MCF 10A (cell line): ENCODE measurements at regions of chr5 and their contacts with region 1.

Region 1: DNA sequence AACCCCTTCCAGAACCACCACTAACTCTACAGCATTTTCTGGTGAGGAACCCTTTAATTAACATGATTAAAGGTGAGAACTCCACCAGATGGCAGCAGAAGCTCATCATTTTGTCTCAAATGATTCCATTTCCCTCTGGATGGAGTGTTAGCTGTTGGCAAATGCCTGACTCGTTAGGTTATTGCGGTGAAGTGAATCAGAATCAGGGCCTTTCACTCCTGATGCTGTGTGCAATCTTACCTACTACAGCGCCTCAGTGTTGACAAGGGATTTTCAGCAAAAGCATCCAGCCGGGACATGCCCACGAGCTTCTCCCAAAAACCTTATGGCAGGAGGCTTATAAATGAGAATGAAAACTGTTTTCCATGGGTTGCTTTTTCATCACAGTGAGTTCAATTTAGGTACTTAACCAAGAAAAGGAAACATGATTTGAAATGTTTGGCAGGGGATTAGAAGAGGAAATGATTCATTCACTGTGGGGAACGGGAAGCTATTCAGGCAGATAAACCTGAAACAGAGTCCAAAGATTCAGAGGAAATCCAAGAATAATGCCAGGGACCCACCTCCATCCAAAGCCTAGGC is 48.0 kb upstream of the CAST start:
- DNase-seq: peak; percentile 95
- H3K4me3 Mint-ChIP-seq: peak overlapping the region; percentile 33
- H3K27ac Mint-ChIP-seq: peak overlapping the region; percentile 84
- H3K4me1 Mint-ChIP-seq: peaks cover 22% of the 10 kb centered on the region
- H3K27me3 Mint-ChIP-seq: no peaks in the 10 kb centered on the region
- CTCF ChIP-seq: peak; percentile 66

Region 2: DNA sequence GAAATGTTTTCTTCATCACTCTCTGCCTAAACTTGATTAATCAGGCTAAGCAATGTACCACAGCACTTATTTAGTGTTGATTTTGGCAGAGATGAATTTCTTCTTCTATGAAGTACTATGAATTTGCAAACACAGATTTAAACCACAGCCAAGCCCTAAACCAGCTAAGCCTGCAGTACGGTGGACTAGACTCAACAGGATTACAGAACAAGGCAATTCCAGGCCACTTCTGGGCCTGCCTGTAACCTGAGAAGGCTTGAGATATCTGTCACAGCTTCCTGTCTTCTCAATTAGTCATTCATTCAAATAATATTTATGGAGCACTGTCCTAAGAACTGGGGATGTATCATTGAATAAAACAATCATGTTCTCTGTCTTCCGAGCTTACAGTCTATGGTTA is 15.6 kb after region 1 on chr5:
- CTCF ChIA-PET with region 1: interaction called, 12 read pairs
- POLR2A ChIA-PET with region 1: interaction called, 21 read pairs
- intact Hi-C with region 1: no loop called
- DNase-seq: peak; percentile 95
- H3K4me3 Mint-ChIP-seq: peak overlapping the region; percentile 3
- H3K27ac Mint-ChIP-seq: peak overlapping the region; percentile 89
- H3K4me1 Mint-ChIP-seq: peaks cover 31% of the 10 kb centered on the region
- H3K27me3 Mint-ChIP-seq: no peaks in the 10 kb centered on the region
- CTCF ChIP-seq: no peak

Region 3: GRCh38 chr5:96662725-96663513 is 48.7 kb after region 1 on chr5:
- CTCF ChIA-PET with region 1: interaction called, 47 read pairs
- POLR2A ChIA-PET with region 1: interaction called, 157 read pairs
- intact Hi-C with region 1: loop called (anchors 1 kb)
- DNase-seq: peak; percentile 95
- H3K4me3 Mint-ChIP-seq: peak overlapping the region; percentile 76
- H3K27ac Mint-ChIP-seq: peak overlapping the region; percentile 91
- H3K4me1 Mint-ChIP-seq: peaks cover 20% of the 10 kb centered on the region
- H3K27me3 Mint-ChIP-seq: no peaks in the 10 kb centered on the region
- CTCF ChIP-seq: no peak

Region 4: DNA sequence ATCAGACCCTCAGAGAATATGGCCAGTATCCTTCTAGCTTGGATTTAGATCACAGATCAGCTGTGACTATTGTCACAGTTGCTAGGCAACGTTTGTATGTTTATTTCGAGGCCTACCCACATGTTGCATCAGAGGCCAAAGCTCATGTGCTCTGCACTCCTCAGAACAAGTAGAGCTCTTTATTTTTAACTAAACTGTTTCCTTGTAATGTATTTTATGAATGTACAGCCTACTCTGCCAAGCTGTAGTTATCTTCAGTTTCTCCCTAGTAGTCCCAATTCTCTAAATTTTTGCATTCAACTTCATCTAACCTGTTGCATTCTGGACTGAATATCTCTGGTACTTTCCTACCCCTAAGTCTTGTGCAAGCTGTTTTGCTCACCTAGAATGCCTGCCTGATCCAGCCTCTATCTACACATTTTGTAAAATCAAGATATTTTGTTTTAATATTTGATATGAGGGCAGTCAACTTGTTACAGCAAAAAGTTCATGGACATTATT is 100.8 kb after region 1 on chr5:
- CTCF ChIA-PET with region 1: interaction called, 8 read pairs
- POLR2A ChIA-PET with region 1: interaction called, 10 read pairs
- intact Hi-C with region 1: no loop called
- DNase-seq: peak; percentile 74
- H3K4me3 Mint-ChIP-seq: no peak overlapping the region
- H3K27ac Mint-ChIP-seq: peak overlapping the region; percentile 93
- H3K4me1 Mint-ChIP-seq: peaks cover 43% of the 10 kb centered on the region
- H3K27me3 Mint-ChIP-seq: no peaks in the 10 kb centered on the region
- CTCF ChIP-seq: no peak

Region 5: GRCh38 chr5:96823900-96824351 is 209.7 kb after region 1 on chr5:
- CTCF ChIA-PET with region 1: no interaction called
- POLR2A ChIA-PET with region 1: no interaction called
- intact Hi-C with region 1: no loop called
- DNase-seq: peak; percentile 64
- H3K4me3 Mint-ChIP-seq: no peak overlapping the region
- H3K27ac Mint-ChIP-seq: no peak overlapping the region
- H3K4me1 Mint-ChIP-seq: peaks cover 5% of the 10 kb centered on the region
- H3K27me3 Mint-ChIP-seq: no peaks in the 10 kb centered on the region
- CTCF ChIP-seq: no peak

Region 6: GRCh38 chr5:96868603-96869371 is 254.6 kb after region 1 on chr5:
- CTCF ChIA-PET with region 1: no interaction called
- POLR2A ChIA-PET with region 1: no interaction called
- intact Hi-C with region 1: loop called (anchors 2 kb)
- DNase-seq: peak; percentile 69
- H3K4me3 Mint-ChIP-seq: no peak overlapping the region
- H3K27ac Mint-ChIP-seq: no peak overlapping the region
- H3K4me1 Mint-ChIP-seq: peaks cover 6% of the 10 kb centered on the region
- H3K27me3 Mint-ChIP-seq: no peaks in the 10 kb centered on the region
- CTCF ChIP-seq: peak; percentile 95